Calu3 (cell line): ENCODE measurements at regions of chr17 and their contacts with region 1.

Region 1: GRCh38 chr17:79850571-79851461 is 11.6 kb upstream of the CBX4 start:
- DNase-seq: peak; percentile 74
- H3K4me3 Mint-ChIP-seq: peak overlapping the region; percentile 4
- H3K27ac Mint-ChIP-seq: peak overlapping the region; percentile 86
- H3K4me1 Mint-ChIP-seq: peaks cover 30% of the 10 kb centered on the region
- H3K27me3 Mint-ChIP-seq: peaks cover 10% of the 10 kb centered on the region
- CTCF ChIP-seq: no peak

Region 2: DNA sequence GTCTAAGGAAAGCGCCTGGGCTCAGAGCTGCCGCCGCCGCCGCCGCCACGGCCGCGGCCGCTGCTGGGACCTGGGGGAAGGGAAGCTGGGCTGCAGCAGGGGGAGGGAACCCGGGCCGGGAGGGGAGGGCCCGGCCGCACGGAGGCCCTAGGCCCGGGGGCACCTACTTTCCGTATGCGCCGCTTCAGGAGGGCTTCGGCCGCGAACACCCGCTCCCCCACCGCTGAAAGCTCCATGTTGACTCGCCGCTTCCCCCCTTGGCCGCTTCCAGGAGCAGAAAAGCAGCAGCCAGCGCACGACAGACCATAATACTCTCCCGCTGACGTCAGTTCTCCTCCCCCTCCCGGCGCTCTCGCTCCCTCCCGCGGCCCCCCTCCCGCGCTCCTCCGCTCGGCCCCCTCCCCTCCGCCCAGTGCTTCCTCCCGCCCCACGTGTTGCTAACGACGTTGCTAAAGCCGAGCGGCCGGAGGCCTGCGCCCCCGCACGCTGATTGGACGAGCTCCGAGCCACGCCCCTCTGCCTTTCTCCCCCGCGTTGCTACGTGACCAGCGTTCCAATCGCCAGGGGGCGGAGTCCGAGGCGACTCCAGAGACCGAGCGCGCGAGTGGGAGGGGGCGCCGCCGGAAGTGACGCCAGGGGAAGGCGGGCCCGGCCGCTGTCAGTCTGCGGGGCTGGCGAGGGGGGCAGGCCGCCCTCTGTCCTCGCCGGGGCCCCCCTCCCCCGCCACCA is 53.9 kb before region 1 on chr17 and contains the start of gene CBX8:
- CTCF ChIA-PET with region 1: no interaction called
- intact Hi-C with region 1: no loop called
- DNase-seq: peak; percentile 100
- H3K4me3 Mint-ChIP-seq: peak within 1 kb of the TSS; percentile 75
- H3K27ac Mint-ChIP-seq: peak within 1 kb of the TSS; percentile 86
- H3K4me1 Mint-ChIP-seq: peaks cover 22% of the 10 kb centered on the region
- H3K27me3 Mint-ChIP-seq: peaks cover 39% of the 10 kb centered on the region
- CTCF ChIP-seq: no peak
- total RNA-seq, gene CBX8: 11.1 and 11.8 TPM in 2 replicates

Region 3: DNA sequence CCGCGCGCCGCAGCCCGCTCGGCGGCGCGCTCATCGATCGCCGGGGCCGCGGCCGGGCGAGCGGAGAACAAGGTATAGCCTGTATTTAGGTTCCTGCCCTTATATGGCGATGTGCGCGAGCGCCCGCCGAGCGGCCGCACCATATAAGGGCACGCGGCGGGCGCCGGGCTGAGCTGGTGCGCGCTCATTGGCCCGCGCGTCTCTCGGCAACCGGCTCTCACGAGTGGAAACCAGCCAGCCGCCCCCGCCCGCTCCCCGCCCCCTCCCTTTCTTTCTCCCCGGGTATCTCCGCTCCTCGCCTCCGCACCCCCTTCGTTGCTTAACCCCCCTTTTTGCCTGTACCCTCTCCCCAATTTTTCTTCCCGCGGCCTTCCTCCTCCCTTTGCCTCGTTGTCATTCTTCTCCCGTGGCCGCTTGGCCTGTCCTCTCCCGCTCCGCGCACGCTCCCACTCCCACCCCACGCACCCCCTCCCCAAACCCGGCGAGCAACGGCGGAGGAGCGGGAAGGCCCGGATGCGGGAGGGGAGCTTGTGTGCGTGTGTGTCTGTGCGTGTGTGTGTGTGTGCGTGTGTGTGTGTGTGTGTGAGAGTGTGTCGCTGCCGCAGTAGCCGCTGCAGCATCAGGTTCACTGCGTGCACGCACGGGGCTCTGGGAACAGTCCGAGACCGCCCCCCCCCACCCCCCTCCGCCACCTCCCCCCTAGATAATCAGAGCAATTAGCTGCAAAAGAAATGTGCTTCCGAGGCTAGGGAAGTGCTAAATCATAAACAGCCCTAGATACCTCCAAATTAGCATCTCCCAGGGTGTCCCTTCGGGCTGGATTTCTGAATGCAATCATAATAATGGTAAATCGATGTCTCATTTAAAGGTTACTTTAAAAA is 40.4 kb before region 1 on chr17:
- CTCF ChIA-PET with region 1: interaction called, 5 read pairs
- intact Hi-C with region 1: loop called (anchors 5 kb)
- DNase-seq: peak; percentile 88
- H3K4me3 Mint-ChIP-seq: peak overlapping the region; percentile 65
- H3K27ac Mint-ChIP-seq: peak overlapping the region; percentile 48
- H3K4me1 Mint-ChIP-seq: peaks cover 22% of the 10 kb centered on the region
- H3K27me3 Mint-ChIP-seq: peaks cover 52% of the 10 kb centered on the region
- CTCF ChIP-seq: no peak

Region 4: GRCh38 chr17:79839363-79840268 is 11.2 kb before region 1 on chr17 and contains the start of gene CBX4:
- CTCF ChIA-PET with region 1: interaction called, 10 read pairs
- intact Hi-C with region 1: no loop called
- DNase-seq: peak; percentile 96
- H3K4me3 Mint-ChIP-seq: peak within 1 kb of the TSS; percentile 85
- H3K27ac Mint-ChIP-seq: peak within 1 kb of the TSS; percentile 74
- H3K4me1 Mint-ChIP-seq: peaks cover 15% of the 10 kb centered on the region
- H3K27me3 Mint-ChIP-seq: peaks cover 38% of the 10 kb centered on the region
- CTCF ChIP-seq: peak; percentile 97
- total RNA-seq, gene CBX4: 40.2 and 46.8 TPM in 2 replicates

Region 5: DNA sequence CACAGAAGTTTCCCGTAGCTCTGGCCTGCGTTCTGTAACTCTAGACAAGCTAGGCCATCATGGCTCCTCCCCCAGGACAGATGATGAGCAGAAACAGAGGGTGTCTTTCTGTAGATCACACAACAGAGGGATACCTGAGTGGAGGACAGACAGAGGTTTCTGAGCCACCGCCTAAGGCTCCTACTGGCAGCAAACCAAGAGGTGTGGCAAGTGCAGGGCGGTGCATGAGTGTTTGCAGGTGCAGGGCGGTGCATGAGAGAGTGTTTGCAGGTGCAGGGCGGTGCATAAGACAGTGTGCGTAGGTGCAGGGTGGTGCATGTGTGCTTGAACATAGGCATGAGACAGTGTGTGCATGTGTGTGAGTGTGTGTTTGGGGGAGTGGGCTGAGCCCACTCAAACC is 41.6 kb after region 1 on chr17:
- CTCF ChIA-PET with region 1: no interaction called
- intact Hi-C with region 1: no loop called
- DNase-seq: peak; percentile 55
- H3K4me3 Mint-ChIP-seq: no peak overlapping the region
- H3K27ac Mint-ChIP-seq: peak overlapping the region; percentile 12
- H3K4me1 Mint-ChIP-seq: peaks cover 18% of the 10 kb centered on the region
- H3K27me3 Mint-ChIP-seq: peaks cover 6% of the 10 kb centered on the region
- CTCF ChIP-seq: no peak